ENCODE measurements at regions of chr5 and their contacts with region 1.

Region 1: DNA sequence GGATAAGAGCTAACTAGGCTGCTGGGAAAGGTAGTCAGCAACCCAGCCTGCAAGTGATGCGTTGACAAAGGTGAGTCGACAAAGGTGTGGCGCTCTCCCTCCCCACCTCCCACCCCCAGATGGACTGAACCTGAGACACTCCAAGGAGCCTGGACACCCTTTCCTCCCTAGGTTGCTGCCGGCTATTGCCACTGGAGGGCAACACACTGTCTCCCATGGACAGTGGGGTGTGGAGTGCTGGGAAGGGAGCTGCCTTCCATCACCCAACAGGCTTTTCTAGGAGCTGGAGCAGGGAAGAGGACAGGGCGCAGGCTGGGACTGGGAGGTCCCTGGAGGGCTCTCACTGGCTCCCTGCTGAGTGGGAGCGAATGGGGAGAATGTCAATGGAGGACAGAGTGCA is 75.4 kb upstream of the ARAP3 start:
- DNase-seq: peak; percentile 64 to 75
- H3K4me3 ChIP-seq: no peak overlapping the region
- H3K27ac ChIP-seq: no peak overlapping the region
- H3K4me1 ChIP-seq: peaks cover 14% of the 10 kb centered on the region
- H3K27me3 ChIP-seq: no peaks in the 10 kb centered on the region
- CTCF ChIP-seq: peak; percentile 74

Region 2: DNA sequence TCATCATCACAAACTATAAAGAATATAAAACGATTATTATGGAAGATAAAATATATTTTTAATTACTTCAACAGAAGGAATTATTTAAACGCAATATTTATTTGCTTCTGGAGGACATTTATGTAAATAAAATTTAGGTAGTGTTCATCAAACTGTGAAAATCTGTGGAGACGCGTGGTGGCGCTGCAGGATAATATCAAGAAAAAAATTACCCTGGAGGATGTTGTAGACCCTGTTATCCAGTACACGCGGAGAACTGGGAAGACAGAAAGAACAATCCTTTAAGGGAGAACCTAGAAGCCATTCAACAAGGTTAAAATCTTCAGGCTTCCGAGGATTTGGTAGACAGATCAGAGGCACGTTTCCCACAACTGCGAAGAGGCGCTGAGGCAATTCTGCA is 548.9 kb before region 1 on chr5 and contains the start of gene PCDHB12:
- CTCF ChIA-PET with region 1: no interaction called
- POLR2A ChIA-PET with region 1: no interaction called
- intact Hi-C with region 1: no loop called
- DNase-seq: no peak
- H3K4me3 ChIP-seq: no peak within 1 kb of the TSS
- H3K27ac ChIP-seq: no peak within 1 kb of the TSS
- H3K4me1 ChIP-seq: no peaks in the 10 kb centered on the region
- H3K27me3 ChIP-seq: no peaks in the 10 kb centered on the region; the same call in 1 of the 2 replicates
- CTCF ChIP-seq: peak; percentile 52
- total RNA-seq, gene PCDHB12: not detected in 2 replicates

Region 3: DNA sequence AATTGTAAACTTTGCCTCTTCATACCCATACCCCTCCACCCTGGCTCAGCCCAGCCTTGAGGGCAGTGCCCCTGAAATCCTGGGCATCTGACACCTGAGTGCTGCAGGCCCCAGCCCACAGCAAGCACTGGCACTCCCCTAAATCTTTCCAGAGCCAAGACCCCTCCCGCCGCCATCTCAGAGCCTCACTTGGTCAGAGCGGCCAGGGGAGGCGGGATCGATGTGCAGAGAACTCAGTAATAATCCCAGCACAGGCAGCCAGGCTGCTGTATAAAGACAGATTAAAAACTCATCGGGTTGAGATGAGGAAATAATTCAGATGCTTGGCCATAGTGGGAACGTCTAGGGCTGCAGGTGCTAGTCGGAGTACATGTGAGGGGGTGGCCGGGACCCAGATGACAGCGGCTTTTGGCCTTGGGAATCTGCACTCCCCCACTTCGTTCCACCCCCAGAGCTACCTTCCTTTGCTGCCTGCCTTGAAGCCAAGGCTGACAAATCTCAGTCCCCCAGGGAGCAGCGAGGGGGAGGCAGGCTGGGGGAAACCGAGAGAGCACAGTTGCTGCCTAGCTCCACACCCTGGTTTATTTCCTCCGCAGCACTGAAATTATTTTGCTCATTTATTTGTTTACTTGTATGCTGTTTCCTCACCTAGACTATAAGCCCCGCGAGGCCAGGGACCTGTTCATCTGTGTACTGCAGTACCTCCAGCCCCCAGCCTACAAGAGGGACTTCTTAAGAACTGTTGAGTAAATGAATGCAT is 55.9 kb before region 1 on chr5:
- CTCF ChIA-PET with region 1: interaction called, 9 read pairs
- POLR2A ChIA-PET with region 1: no interaction called
- intact Hi-C with region 1: loop called (anchors 1 kb)
- DNase-seq: no peak
- H3K4me3 ChIP-seq: no peak overlapping the region
- H3K27ac ChIP-seq: no peak overlapping the region
- H3K4me1 ChIP-seq: peaks cover 59% of the 10 kb centered on the region
- H3K27me3 ChIP-seq: no peaks in the 10 kb centered on the region
- CTCF ChIP-seq: no peak

Region 4: DNA sequence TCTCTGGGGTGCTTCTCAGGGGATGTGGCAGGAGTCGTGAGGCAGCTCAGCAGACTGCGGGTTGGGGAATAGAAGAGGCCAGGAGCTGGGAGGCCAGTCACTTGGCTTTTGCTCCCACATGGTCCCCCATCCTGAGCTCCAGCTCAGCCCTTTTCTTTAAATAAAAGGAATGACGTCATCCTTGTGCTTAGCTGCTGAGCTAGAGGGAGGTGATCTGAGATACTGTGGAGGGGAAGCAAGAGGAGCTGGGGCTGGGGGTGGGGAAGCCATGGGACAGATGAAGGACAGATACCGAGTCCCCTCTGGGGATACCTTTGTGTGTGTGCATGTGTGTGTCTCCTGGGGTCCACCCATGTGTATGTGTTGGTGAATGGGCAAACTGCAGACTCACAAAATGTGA is 13.6 kb after region 1 on chr5:
- CTCF ChIA-PET with region 1: no interaction called
- POLR2A ChIA-PET with region 1: no interaction called
- intact Hi-C with region 1: no loop called
- DNase-seq: peak in 1 of 2 experiments; percentile 13
- H3K4me3 ChIP-seq: no peak overlapping the region
- H3K27ac ChIP-seq: no peak overlapping the region
- H3K4me1 ChIP-seq: no peaks in the 10 kb centered on the region
- H3K27me3 ChIP-seq: no peaks in the 10 kb centered on the region; the same call in 1 of the 2 replicates
- CTCF ChIP-seq: no peak

Region 5: GRCh38 chr5:141843162-141843927 is 85.9 kb after region 1 on chr5:
- CTCF ChIA-PET with region 1: interaction called, 12 read pairs
- POLR2A ChIA-PET with region 1: no interaction called
- intact Hi-C with region 1: no loop called
- DNase-seq: peak; percentile 67 to 86
- H3K4me3 ChIP-seq: no peak overlapping the region
- H3K27ac ChIP-seq: peak overlapping the region; percentile 58
- H3K4me1 ChIP-seq: peaks cover 64% of the 10 kb centered on the region
- H3K27me3 ChIP-seq: no peaks in the 10 kb centered on the region
- CTCF ChIP-seq: no peak

Region 6: DNA sequence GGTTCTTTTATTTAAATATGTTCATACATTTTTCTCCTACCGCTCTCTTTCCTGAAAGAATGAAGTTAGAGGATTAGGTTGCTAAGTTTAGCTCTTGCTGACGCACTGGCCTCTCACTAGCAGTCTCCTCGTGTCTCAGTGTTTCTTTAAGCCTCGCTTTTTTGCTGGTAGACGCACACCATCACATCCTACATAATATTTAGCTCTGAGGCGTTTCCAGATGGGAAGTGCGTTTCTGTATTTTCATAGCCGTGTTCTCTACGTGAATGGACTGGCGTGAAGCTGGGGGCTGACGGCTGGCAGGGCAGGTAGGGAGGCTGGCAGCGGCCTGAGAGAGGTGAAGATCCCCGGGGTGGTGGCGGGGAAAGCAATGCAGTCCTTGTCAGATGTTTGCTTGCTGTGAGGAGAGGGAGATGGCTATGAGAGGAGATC is 646.7 kb after region 1 on chr5:
- CTCF ChIA-PET with region 1: no interaction called
- POLR2A ChIA-PET with region 1: no interaction called
- intact Hi-C with region 1: no loop called
- DNase-seq: no peak
- H3K4me3 ChIP-seq: peak overlapping the region; percentile 55
- H3K27ac ChIP-seq: peak overlapping the region; percentile 87
- H3K4me1 ChIP-seq: peaks cover 57% of the 10 kb centered on the region
- H3K27me3 ChIP-seq: no peaks in the 10 kb centered on the region
- CTCF ChIP-seq: no peak

Measured in PC-9 (cell line).